Activated B cell treated with CpG ODN at 0.5 μM for 24 hours (primary cell): ENCODE measurements at regions of chr16 and their contacts with region 1.

Region 1: DNA sequence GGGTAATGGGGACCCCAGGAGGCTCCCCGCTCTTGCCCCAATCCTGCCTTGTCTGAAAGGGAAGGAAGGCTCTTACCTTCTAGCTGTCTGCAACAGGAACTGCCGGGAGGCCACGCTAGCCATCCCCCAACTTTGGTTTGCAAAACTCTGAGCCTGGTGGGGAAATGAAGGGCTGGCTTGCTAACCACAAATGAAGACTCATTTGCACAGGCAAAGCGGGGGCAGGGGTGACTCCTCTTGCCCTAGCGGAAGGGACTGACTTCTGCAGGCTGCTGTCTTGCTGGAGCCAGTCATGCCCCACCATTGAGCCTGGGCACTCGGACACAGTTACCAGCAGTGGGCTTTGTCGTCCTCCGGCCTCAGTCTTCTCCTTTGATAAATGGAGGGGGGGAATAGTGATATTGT is 52.6 kb downstream of the PLCG2 start:
- DNase-seq: peak; percentile 69
- ATAC-seq: peak; percentile 69
- H3K4me3 Mint-ChIP-seq: peak overlapping the region; percentile 77
- H3K27ac Mint-ChIP-seq: peak overlapping the region; percentile 97
- H3K4me1 Mint-ChIP-seq: peaks cover 96% of the 10 kb centered on the region
- H3K27me3 Mint-ChIP-seq: no peaks in the 10 kb centered on the region
- CTCF ChIP-seq: no peak

Region 2: GRCh38 chr16:81570151-81570846 is 261.4 kb before region 1 on chr16:
- CTCF ChIA-PET with region 1: no interaction called
- POLR2A ChIA-PET with region 1: interaction called, 15 read pairs
- intact Hi-C with region 1: no loop called
- DNase-seq: no peak
- ATAC-seq: no peak
- H3K4me3 Mint-ChIP-seq: no peak overlapping the region
- H3K27ac Mint-ChIP-seq: no peak overlapping the region
- H3K4me1 Mint-ChIP-seq: peaks cover 17% of the 10 kb centered on the region
- H3K27me3 Mint-ChIP-seq: no peaks in the 10 kb centered on the region
- CTCF ChIP-seq: no peak

Region 3: GRCh38 chr16:81817789-81818567 is 13.7 kb before region 1 on chr16:
- CTCF ChIA-PET with region 1: interaction called, 9 read pairs
- POLR2A ChIA-PET with region 1: interaction called, 60 read pairs
- intact Hi-C with region 1: loop called (anchors 1 kb)
- DNase-seq: no peak
- ATAC-seq: peak; percentile 65
- H3K4me3 Mint-ChIP-seq: peak overlapping the region; percentile 66
- H3K27ac Mint-ChIP-seq: peak overlapping the region; percentile 96
- H3K4me1 Mint-ChIP-seq: peaks cover 98% of the 10 kb centered on the region
- H3K27me3 Mint-ChIP-seq: no peaks in the 10 kb centered on the region
- CTCF ChIP-seq: no peak

Region 4: DNA sequence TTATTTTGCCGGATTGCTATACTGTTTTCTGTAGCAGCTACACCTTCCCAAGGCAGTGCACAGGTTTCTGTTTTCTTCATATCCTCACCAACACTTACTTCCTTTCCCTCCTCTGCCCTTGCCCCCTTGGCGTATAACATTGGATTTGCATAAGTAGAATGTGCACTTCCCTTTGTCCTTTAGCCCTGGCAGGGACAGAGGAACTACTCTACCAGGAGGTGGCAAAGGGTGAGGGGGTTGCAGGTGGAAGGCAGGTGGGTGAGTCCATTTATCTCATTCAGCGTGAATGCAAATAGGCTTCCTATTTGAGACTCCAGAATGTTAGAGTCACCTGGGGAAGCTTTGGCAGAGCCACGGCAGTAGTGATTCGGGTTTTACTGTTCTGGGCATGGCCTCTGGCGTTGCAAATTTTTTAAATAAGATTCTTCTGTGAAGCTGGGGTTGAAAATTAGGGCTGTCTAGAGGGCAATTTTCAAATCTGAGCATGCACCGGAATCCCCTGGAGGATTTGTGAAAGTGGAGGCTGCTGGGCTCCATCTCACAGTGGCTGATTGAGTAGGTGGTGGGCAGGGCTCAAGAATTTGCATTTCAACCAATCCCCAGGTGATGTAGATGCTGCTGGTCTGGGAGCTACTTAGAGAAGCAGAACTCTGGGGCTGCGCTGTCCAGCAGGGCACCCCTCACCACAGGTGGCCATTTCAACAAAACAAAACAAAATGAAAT is 32.1 kb after region 1 on chr16:
- CTCF ChIA-PET with region 1: no interaction called
- POLR2A ChIA-PET with region 1: interaction called, 10 read pairs
- intact Hi-C with region 1: no loop called
- DNase-seq: no peak
- ATAC-seq: peak; percentile 73
- H3K4me3 Mint-ChIP-seq: peak overlapping the region; percentile 71
- H3K27ac Mint-ChIP-seq: peak overlapping the region; percentile 88
- H3K4me1 Mint-ChIP-seq: peaks cover 74% of the 10 kb centered on the region
- H3K27me3 Mint-ChIP-seq: no peaks in the 10 kb centered on the region
- CTCF ChIP-seq: no peak